PC-3 (cell line): ENCODE measurements at regions of chr1 and their contacts with region 1.

Region 1: GRCh38 chr1:85276215-85276977 is at the start of gene BCL10:
- DNase-seq: peak; percentile 99
- ATAC-seq: peak; percentile 92
- H3K4me3 ChIP-seq: peak within 1 kb of the TSS; percentile 89
- H3K27ac ChIP-seq: peak within 1 kb of the TSS; percentile 66
- H3K4me1 ChIP-seq: peaks cover 45% of the 10 kb centered on the region
- H3K27me3 ChIP-seq: no peaks in the 10 kb centered on the region
- CTCF ChIP-seq: no peak
- total RNA-seq, gene BCL10: 28.1 and 29.9 TPM in 2 replicates

Region 2: GRCh38 chr1:85230305-85230980 is 46.0 kb before region 1 on chr1:
- CTCF ChIA-PET with region 1: no interaction called
- POLR2A ChIA-PET with region 1: no interaction called
- intact Hi-C with region 1: no loop called
- DNase-seq: peak; percentile 23
- ATAC-seq: no peak
- H3K4me3 ChIP-seq: no peak overlapping the region
- H3K27ac ChIP-seq: no peak overlapping the region
- H3K4me1 ChIP-seq: peaks cover 8% of the 10 kb centered on the region
- H3K27me3 ChIP-seq: no peaks in the 10 kb centered on the region
- CTCF ChIP-seq: peak; percentile 42

Region 3: GRCh38 chr1:85289207-85289847 is 12.9 kb after region 1 on chr1:
- CTCF ChIA-PET with region 1: no interaction called
- POLR2A ChIA-PET with region 1: interaction called, 4 read pairs
- intact Hi-C with region 1: loop called (anchors 1 kb)
- DNase-seq: peak; percentile 97
- ATAC-seq: peak; percentile 96
- H3K4me3 ChIP-seq: peak overlapping the region; percentile 38; the same call in 1 of the 2 replicates
- H3K27ac ChIP-seq: peak overlapping the region; percentile 95
- H3K4me1 ChIP-seq: peaks cover 56% of the 10 kb centered on the region
- H3K27me3 ChIP-seq: no peaks in the 10 kb centered on the region
- CTCF ChIP-seq: no peak

Region 4: DNA sequence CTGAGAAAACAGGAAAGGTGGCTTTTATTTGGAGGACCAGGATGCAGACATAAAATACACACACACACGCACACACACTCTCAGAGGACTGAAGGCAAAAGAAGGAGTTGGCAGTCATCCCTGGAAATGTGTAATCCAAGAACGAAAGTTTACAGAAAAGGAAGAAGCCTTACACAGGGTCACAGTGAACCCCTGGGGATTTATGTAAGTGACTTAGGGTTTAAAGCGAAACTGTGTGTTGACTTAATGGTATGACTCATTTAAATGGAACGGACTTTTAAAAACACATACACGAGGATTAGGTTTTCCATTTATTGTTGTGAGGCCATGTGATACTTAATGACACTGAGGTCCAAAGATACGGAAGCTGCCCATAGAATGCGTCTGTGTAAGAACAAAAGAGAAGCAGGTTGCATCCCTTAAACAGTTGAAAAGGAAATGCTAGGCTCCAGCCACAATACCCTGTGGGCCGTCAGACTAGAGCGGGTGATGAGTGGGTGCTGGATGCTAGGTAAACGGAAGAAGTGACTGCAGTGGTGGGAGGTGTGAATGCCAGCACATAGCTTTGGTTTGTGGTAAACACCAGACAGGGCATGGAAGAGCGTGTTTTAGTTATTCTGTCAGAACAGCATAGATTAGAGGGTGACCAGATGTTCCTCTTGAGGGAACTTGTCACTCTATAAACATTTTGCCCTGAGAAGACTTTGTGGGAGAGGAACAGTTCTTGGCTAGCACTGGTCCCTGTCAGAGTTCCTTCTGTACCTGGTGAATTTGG is 21.6 kb after region 1 on chr1:
- CTCF ChIA-PET with region 1: no interaction called
- POLR2A ChIA-PET with region 1: interaction called, 9 read pairs
- intact Hi-C with region 1: loop called (anchors 1 kb)
- DNase-seq: peak; percentile 99
- ATAC-seq: peak; percentile 71
- H3K4me3 ChIP-seq: peak overlapping the region; percentile 33
- H3K27ac ChIP-seq: peak overlapping the region; percentile 95
- H3K4me1 ChIP-seq: peaks cover 57% of the 10 kb centered on the region
- H3K27me3 ChIP-seq: no peaks in the 10 kb centered on the region
- CTCF ChIP-seq: no peak